Activated B cell treated with CpG ODN at 0.5 μM for 24 hours (primary cell): ENCODE measurements at regions of chr4 and their contacts with region 1.

Region 1: DNA sequence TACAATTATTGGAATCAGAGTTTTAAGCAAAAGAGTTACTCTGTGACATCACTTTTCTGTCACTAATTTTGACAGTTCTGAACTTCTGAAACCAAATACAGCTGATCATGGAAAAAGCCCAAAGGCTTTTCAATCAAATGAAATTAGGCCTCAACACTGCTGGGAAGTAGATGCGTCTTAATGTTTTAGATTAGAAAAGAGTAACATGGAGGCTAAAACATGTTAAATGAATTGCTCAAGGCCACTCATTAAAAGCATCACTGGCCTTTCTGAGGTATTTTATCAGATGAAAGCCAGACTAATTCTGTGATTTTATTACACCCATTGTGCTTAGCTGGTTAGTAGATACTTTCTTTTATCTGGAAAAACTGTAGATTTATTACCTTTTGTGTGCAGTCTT is 672.6 kb downstream of the CENPC start:
- DNase-seq: no peak
- ATAC-seq: no peak
- H3K4me3 Mint-ChIP-seq: no peak overlapping the region
- H3K27ac Mint-ChIP-seq: no peak overlapping the region
- H3K4me1 Mint-ChIP-seq: no peaks in the 10 kb centered on the region
- H3K27me3 Mint-ChIP-seq: no peaks in the 10 kb centered on the region
- CTCF ChIP-seq: no peak

Region 2: DNA sequence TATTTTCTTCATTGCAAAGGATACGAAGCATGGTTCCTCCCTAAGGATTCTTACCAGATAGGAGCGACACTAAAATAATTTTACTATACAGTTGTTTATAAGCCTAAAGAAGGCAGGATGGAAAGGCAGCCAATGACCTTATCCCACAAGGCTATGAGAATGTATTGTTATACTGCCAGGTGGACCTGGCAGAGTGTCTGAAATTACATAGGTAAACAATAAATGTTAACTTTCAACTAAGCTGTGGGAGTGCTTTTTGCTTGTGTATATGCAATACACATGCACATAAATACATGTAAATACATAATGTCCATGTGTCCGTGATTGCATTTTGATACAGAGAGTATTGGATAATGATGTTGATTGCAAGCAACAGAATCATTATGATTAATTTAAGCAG is 177.9 kb before region 1 on chr4:
- CTCF ChIA-PET with region 1: no interaction called
- POLR2A ChIA-PET with region 1: no interaction called
- intact Hi-C with region 1: no loop called
- DNase-seq: no peak
- ATAC-seq: no peak
- H3K4me3 Mint-ChIP-seq: no peak overlapping the region
- H3K27ac Mint-ChIP-seq: no peak overlapping the region
- H3K4me1 Mint-ChIP-seq: no peaks in the 10 kb centered on the region
- H3K27me3 Mint-ChIP-seq: no peaks in the 10 kb centered on the region
- CTCF ChIP-seq: no peak

Region 3: GRCh38 chr4:66849596-66849995 is 23.1 kb before region 1 on chr4:
- CTCF ChIA-PET with region 1: no interaction called
- POLR2A ChIA-PET with region 1: no interaction called
- intact Hi-C with region 1: loop called (anchors 2 kb)
- DNase-seq: no peak
- ATAC-seq: no peak
- H3K4me3 Mint-ChIP-seq: no peak overlapping the region
- H3K27ac Mint-ChIP-seq: no peak overlapping the region
- H3K4me1 Mint-ChIP-seq: no peaks in the 10 kb centered on the region
- H3K27me3 Mint-ChIP-seq: no peaks in the 10 kb centered on the region
- CTCF ChIP-seq: no peak

Region 4: GRCh38 chr4:67403342-67403741 is 530.7 kb after region 1 on chr4:
- CTCF ChIA-PET with region 1: no interaction called
- POLR2A ChIA-PET with region 1: no interaction called
- intact Hi-C with region 1: no loop called
- DNase-seq: no peak
- ATAC-seq: no peak
- H3K4me3 Mint-ChIP-seq: no peak overlapping the region
- H3K27ac Mint-ChIP-seq: no peak overlapping the region
- H3K4me1 Mint-ChIP-seq: no peaks in the 10 kb centered on the region
- H3K27me3 Mint-ChIP-seq: no peaks in the 10 kb centered on the region
- CTCF ChIP-seq: no peak

Region 5: DNA sequence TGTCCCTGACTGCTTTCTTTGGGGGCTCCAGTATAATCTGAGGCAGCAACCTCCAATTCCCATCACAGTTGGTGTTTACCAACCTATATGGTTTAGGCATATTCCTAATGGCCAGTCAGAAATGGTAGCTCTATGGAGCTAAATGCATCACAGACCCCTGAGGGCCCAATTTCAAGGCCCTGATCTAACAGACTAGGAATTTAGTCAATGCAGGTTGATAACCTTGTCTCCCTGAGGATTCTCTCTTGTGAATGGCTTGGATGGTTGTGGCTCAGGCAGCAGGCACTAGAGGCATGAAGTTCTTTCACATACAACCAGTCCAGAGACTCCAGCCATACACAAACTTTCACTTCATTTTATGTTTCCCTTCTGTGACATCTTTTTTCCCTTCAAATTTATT is 1197.6 kb after region 1 on chr4:
- CTCF ChIA-PET with region 1: no interaction called
- POLR2A ChIA-PET with region 1: no interaction called
- intact Hi-C with region 1: no loop called
- DNase-seq: no peak
- ATAC-seq: no peak
- H3K4me3 Mint-ChIP-seq: no peak overlapping the region
- H3K27ac Mint-ChIP-seq: no peak overlapping the region
- H3K4me1 Mint-ChIP-seq: no peaks in the 10 kb centered on the region
- H3K27me3 Mint-ChIP-seq: no peaks in the 10 kb centered on the region
- CTCF ChIP-seq: no peak